Activated naive CD4-positive, alpha-beta T cell treated with anti-CD3 and anti-CD28 coated beads for 36 hours (primary cell): ENCODE measurements at regions of chr10 and their contacts with region 1.

Region 1: GRCh38 chr10:23362879-23363792 is 18.5 kb upstream of the C10orf67 start:
- DNase-seq: peak; percentile 72
- H3K4me3 Mint-ChIP-seq: peak overlapping the region; percentile 68
- H3K27ac Mint-ChIP-seq: peak overlapping the region; percentile 95
- H3K4me1 Mint-ChIP-seq: peaks cover 58% of the 10 kb centered on the region
- H3K27me3 Mint-ChIP-seq: no peaks in the 10 kb centered on the region

Region 2: DNA sequence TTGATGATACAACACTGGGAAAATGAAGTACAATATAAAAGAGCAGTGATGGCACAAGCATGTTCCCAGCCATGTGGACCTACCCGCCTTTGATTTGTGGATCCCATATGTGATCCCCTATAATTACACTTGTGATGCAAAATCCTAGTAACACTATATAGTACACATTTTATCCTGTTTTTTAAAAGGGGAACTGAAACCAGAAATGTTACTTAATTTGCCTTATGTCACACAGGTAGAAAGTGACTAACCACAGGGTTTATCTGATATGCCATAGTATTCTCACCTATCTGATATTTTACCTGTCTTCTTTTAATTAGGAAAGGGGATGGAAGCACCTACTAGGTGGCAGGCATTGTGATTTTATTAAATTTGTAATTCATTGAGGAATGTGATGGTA is 400.3 kb before region 1 on chr10:
- CTCF ChIA-PET with region 1: no interaction called
- intact Hi-C with region 1: no loop called
- DNase-seq: no peak
- H3K4me3 Mint-ChIP-seq: no peak overlapping the region
- H3K27ac Mint-ChIP-seq: no peak overlapping the region
- H3K4me1 Mint-ChIP-seq: no peaks in the 10 kb centered on the region
- H3K27me3 Mint-ChIP-seq: no peaks in the 10 kb centered on the region

Region 3: GRCh38 chr10:22997102-22997501 is 366.0 kb before region 1 on chr10:
- CTCF ChIA-PET with region 1: no interaction called
- intact Hi-C with region 1: no loop called
- DNase-seq: no peak
- H3K4me3 Mint-ChIP-seq: no peak overlapping the region
- H3K27ac Mint-ChIP-seq: no peak overlapping the region
- H3K4me1 Mint-ChIP-seq: peaks cover 1% of the 10 kb centered on the region
- H3K27me3 Mint-ChIP-seq: peaks cover 3% of the 10 kb centered on the region

Region 4: GRCh38 chr10:23314835-23315239 is 48.3 kb before region 1 on chr10:
- CTCF ChIA-PET with region 1: interaction called, 5 read pairs
- intact Hi-C with region 1: loop called (anchors 5 kb)
- DNase-seq: peak; percentile 71
- H3K4me3 Mint-ChIP-seq: no peak overlapping the region
- H3K27ac Mint-ChIP-seq: no peak overlapping the region
- H3K4me1 Mint-ChIP-seq: peaks cover 4% of the 10 kb centered on the region
- H3K27me3 Mint-ChIP-seq: no peaks in the 10 kb centered on the region

Region 5: DNA sequence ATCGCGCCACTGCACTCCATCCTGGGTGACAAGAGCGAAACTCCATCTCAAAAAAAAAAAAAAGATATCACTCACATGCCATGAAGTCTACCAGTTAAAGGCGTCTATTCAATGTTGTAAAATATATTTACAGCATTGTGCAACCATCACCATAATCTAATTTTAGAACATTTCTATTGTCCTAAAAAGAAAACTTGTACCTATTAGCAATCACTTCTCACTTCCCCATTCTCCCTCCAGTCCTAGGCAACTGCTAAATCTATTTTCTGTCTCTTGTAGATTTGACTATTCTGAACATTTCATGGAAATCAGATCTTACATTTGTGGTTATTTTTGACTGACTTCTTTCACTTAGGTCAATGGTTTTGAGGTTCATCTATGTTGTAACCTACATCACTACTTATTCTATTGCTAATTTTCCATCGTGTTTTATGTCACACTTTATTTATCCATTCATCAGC is 50.5 kb after region 1 on chr10:
- CTCF ChIA-PET with region 1: no interaction called
- intact Hi-C with region 1: loop called (anchors 1 kb)
- DNase-seq: no peak
- H3K4me3 Mint-ChIP-seq: no peak overlapping the region
- H3K27ac Mint-ChIP-seq: peak overlapping the region; percentile 56
- H3K4me1 Mint-ChIP-seq: peaks cover 28% of the 10 kb centered on the region
- H3K27me3 Mint-ChIP-seq: no peaks in the 10 kb centered on the region

Region 6: DNA sequence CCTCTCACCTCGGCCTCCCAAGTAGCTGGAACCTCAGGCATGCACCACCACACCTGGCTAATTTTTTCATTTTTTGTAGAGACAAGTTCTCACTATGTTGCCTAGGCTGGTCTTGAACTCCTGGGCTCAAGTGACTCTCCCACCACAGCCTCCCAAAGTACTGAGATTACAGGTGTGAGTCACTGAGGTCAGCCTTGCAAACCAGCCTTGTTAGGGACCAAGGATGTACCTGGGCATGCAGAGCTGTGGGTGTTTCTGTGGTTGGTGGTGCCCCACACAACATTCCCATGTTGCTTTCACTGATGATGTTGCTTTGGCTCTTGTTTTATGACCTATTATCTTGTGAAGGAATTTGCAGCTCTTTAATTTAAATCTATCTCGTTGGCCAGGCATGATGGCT is 130.6 kb after region 1 on chr10:
- CTCF ChIA-PET with region 1: no interaction called
- intact Hi-C with region 1: no loop called
- DNase-seq: no peak
- H3K4me3 Mint-ChIP-seq: no peak overlapping the region
- H3K27ac Mint-ChIP-seq: no peak overlapping the region
- H3K4me1 Mint-ChIP-seq: no peaks in the 10 kb centered on the region
- H3K27me3 Mint-ChIP-seq: peaks cover 3% of the 10 kb centered on the region

Region 7: GRCh38 chr10:23535381-23535780 is 172.2 kb after region 1 on chr10:
- CTCF ChIA-PET with region 1: interaction called, 5 read pairs
- intact Hi-C with region 1: loop called (anchors 1 kb)
- DNase-seq: no peak
- H3K4me3 Mint-ChIP-seq: peak overlapping the region; percentile 14
- H3K27ac Mint-ChIP-seq: peak overlapping the region; percentile 72
- H3K4me1 Mint-ChIP-seq: peaks cover 77% of the 10 kb centered on the region
- H3K27me3 Mint-ChIP-seq: no peaks in the 10 kb centered on the region